HepG2 (cell line): ENCODE measurements at regions of chr3 and their contacts with region 1.

Region 1: GRCh38 chr3:161274719-161275298 is 53.7 kb downstream of the NMD3 start:
- DNase-seq: peak; percentile 51
- ATAC-seq: peak; percentile 85
- H3K4me3 ChIP-seq: no peak overlapping the region
- H3K27ac ChIP-seq: no peak overlapping the region
- H3K4me1 ChIP-seq: peaks cover 24% of the 10 kb centered on the region
- H3K27me3 ChIP-seq: no peaks in the 10 kb centered on the region
- CTCF ChIP-seq: peak; percentile 52
- EP300 ChIP-seq: no peak
- POLR2A ChIP-seq: no peak
- RAD21 ChIP-seq: 0 out of 2 replicates have a peak, but pooled peaks have one; percentile 36

Region 2: GRCh38 chr3:160921020-160921635 is 353.7 kb before region 1 on chr3:
- CTCF ChIA-PET with region 1: no interaction called
- POLR2A ChIA-PET with region 1: no interaction called
- in situ Hi-C with region 1: loop called (anchors 10 kb)
- intact Hi-C with region 1: loop called (anchors 10 kb)
- DNase-seq: peak; percentile 30
- ATAC-seq: peak; percentile 96
- H3K4me3 ChIP-seq: no peak overlapping the region
- H3K27ac ChIP-seq: no peak overlapping the region
- H3K4me1 ChIP-seq: no peaks in the 10 kb centered on the region
- H3K27me3 ChIP-seq: no peaks in the 10 kb centered on the region
- CTCF ChIP-seq: peak; percentile 84
- EP300 ChIP-seq: no peak
- POLR2A ChIP-seq: no peak
- RAD21 ChIP-seq: peak; percentile 55

Region 3: DNA sequence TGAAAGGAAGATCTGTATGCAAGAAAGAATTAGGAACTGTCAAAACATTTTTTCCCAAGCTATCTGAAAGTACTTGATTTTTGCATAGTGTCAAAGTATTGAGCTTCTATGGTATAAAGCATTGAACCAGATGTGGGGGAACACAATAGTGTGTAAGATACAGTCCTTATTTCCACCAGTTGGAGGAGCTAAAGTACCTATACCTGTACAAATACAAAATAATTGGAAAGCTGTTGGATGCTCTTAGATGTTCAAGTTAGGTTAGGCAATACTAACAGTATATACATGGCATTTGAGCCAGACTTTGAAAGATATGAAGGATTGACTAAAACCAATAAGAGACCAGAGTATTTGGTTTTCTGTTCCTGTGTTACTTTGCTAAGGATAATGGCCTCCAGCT is 318.0 kb before region 1 on chr3:
- CTCF ChIA-PET with region 1: no interaction called
- POLR2A ChIA-PET with region 1: no interaction called
- in situ Hi-C with region 1: no loop called
- intact Hi-C with region 1: loop called (anchors 5 kb)
- DNase-seq: peak; percentile 8
- ATAC-seq: peak; percentile 84
- H3K4me3 ChIP-seq: no peak overlapping the region
- H3K27ac ChIP-seq: no peak overlapping the region
- H3K4me1 ChIP-seq: no peaks in the 10 kb centered on the region
- H3K27me3 ChIP-seq: no peaks in the 10 kb centered on the region
- CTCF ChIP-seq: peak; percentile 55
- EP300 ChIP-seq: no peak
- POLR2A ChIP-seq: no peak
- RAD21 ChIP-seq: no peak

Region 4: GRCh38 chr3:161096771-161097355 is 177.9 kb before region 1 on chr3:
- CTCF ChIA-PET with region 1: interaction called, 20 read pairs
- POLR2A ChIA-PET with region 1: no interaction called
- in situ Hi-C with region 1: loop called (anchors 10 kb)
- intact Hi-C with region 1: loop called (anchors 1 kb)
- DNase-seq: peak; percentile 38
- ATAC-seq: peak; percentile 78
- H3K4me3 ChIP-seq: no peak overlapping the region
- H3K27ac ChIP-seq: no peak overlapping the region
- H3K4me1 ChIP-seq: peaks cover 10% of the 10 kb centered on the region
- H3K27me3 ChIP-seq: no peaks in the 10 kb centered on the region
- CTCF ChIP-seq: peak; percentile 61
- EP300 ChIP-seq: no peak
- POLR2A ChIP-seq: no peak
- RAD21 ChIP-seq: peak; percentile 43; the same call in 1 of the 2 replicates

Region 5: DNA sequence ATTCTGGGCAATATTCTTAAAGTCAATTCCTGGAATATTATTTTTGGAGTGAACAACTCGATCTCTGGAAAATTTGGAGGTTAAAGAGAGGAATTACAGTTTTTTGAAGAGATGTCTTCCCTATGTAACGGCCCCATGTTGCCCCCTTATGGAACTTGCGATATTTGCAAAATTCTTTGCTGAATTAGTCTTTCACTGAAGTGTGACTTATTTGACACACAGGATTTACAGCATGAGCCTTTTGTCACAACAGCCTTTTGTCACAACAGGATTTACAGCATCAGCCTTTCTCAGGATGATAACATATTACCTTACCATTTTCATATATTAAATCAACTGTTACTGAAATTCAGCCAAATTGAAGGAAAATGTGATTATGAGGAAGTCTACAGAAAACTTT is 134.3 kb after region 1 on chr3:
- CTCF ChIA-PET with region 1: interaction called, 42 read pairs
- POLR2A ChIA-PET with region 1: no interaction called
- in situ Hi-C with region 1: loop called (anchors 5 kb)
- intact Hi-C with region 1: loop called (anchors 1 kb)
- DNase-seq: peak; percentile 55
- ATAC-seq: peak; percentile 62
- H3K4me3 ChIP-seq: no peak overlapping the region
- H3K27ac ChIP-seq: no peak overlapping the region
- H3K4me1 ChIP-seq: peaks cover 77% of the 10 kb centered on the region
- H3K27me3 ChIP-seq: peaks cover 2 to 7% of the 10 kb centered on the region in 2 experiments; a peak in 2 of 5 replicates
- CTCF ChIP-seq: peak; percentile 77
- EP300 ChIP-seq: no peak
- POLR2A ChIP-seq: no peak
- RAD21 ChIP-seq: peak; percentile 74; the same call in 1 of the 2 replicates

Region 6: DNA sequence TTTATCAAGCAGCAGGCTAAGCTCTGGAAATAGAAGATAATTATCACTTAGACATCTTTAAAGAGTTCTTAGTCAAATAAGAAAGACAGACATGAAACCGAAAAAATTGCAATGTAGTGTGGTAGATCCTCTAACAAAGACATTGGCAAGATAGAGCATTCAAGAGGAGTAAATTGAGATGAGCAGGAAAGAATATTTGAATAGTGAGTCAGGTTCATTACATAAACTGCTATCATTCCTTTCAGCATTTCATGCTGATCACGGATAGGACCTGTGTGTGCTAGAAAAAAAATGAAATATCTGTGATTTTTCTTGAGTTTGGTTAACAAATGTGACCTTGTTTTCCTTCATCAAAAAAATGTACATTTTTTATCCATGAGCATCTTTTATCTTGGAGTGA is 682.7 kb after region 1 on chr3:
- CTCF ChIA-PET with region 1: no interaction called
- POLR2A ChIA-PET with region 1: no interaction called
- in situ Hi-C with region 1: no loop called
- intact Hi-C with region 1: no loop called
- DNase-seq: no peak
- ATAC-seq: no peak
- H3K4me3 ChIP-seq: no peak overlapping the region
- H3K27ac ChIP-seq: no peak overlapping the region
- H3K4me1 ChIP-seq: no peaks in the 10 kb centered on the region
- H3K27me3 ChIP-seq: no peaks in the 10 kb centered on the region
- CTCF ChIP-seq: no peak
- EP300 ChIP-seq: no peak
- POLR2A ChIP-seq: no peak
- RAD21 ChIP-seq: no peak